IMR-90 (cell line): ENCODE measurements at regions of chr2 and their contacts with region 1.

Region 1: DNA sequence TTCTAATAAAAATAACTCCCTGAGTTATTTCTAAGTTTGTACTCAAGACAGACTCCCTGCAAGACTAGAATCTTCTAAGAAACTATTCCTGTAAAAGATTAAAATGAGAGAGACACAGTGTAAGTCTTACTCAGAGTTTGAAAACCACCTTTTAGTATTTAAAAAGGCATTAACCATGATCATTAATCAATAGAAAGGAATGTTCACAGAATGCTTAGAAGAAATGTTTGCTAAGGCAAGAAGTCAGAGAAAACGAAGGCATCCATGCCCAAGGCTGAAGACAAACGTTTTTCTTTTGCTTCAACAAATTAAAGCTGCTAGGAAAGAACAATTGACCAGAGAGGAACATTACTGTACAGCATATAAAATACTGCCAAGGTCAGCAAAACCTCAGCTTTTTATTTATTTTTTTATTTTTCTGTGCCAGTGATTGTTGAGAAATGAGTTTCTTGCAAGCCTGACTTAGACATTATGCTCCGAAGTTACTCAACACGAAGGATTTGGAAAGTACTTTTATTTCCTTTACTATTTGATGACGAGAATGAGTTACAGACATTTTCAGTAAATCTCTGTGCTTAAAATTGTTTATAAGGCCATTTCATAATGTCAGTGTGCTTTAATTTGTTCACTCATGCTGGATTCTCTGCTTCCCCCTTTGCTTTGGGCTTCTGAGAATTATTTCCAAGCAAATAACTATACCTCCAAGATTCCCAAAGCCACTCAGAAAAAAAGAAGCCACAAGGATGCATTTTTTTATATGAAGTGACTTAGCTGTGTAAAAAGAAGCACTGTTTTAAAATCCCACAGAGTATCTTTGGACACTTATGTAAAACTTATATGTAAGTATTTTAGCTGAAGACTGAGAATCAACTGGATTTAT is 20.5 kb downstream of the RND3 start:
- DNase-seq: peak; percentile 86
- ATAC-seq: peak; percentile 36
- H3K4me3 ChIP-seq: no peak overlapping the region
- H3K27ac ChIP-seq: peak overlapping the region; percentile 42; the same call in 1 of the 2 replicates
- H3K4me1 ChIP-seq: peaks cover 5% of the 10 kb centered on the region
- H3K27me3 ChIP-seq: no peaks in the 10 kb centered on the region
- CTCF ChIP-seq: no peak
- POLR2A ChIP-seq: peak; percentile 2; the same call in 1 of the 2 replicates
- RAD21 ChIP-seq: no peak

Region 2: DNA sequence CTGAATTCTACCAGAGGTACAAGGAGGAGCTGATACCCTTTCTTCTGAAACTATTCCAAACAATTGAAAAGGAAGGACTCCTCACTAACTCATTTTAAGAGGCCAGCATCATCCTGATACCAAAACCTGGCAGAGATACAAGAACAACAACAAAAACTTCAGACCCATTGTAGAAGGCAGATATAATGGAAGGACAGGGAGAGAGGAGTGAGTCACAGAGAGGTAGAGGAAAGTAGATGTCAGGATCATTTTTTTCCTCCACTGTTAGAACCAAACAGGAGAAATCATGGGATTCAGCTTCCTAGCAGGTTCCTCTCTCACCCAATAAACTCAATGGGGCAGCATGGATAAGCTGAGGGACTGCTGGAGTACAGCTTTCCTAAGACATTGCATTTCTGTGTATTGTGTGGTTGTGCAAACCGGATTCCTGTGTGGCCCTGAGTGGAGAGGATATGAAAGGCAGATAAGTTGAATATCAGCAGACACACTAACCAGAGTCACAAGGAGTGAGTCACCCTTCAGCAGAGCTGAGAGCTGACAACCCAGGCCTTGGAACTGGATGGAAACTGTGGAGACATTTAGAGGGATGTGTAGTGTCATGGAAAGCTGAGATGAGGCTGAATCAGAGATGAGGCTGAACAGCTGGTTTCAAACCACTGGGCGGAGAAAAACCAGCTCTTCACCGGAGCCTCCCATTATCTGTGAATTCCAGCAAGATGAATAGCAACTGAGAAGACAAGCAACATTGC is 818.5 kb before region 1 on chr2:
- CTCF ChIA-PET with region 1: no interaction called
- POLR2A ChIA-PET with region 1: no interaction called
- dilution Hi-C with region 1: no loop called
- in situ Hi-C with region 1: no loop called
- intact Hi-C with region 1: loop called (anchors 5 kb)
- DNase-seq: peak; percentile 99
- ATAC-seq: peak; percentile 96
- H3K4me3 ChIP-seq: no peak overlapping the region
- H3K27ac ChIP-seq: peak overlapping the region; percentile 52; the same call in 1 of the 2 replicates
- H3K4me1 ChIP-seq: peaks cover 8% of the 10 kb centered on the region
- H3K27me3 ChIP-seq: no peaks in the 10 kb centered on the region
- CTCF ChIP-seq: 0 out of 2 replicates have a peak, but pooled peaks have one; percentile 18
- POLR2A ChIP-seq: no peak
- RAD21 ChIP-seq: no peak

Region 3: GRCh38 chr2:149924028-149924427 is 543.0 kb before region 1 on chr2:
- CTCF ChIA-PET with region 1: no interaction called
- POLR2A ChIA-PET with region 1: no interaction called
- dilution Hi-C with region 1: no loop called
- in situ Hi-C with region 1: no loop called
- intact Hi-C with region 1: loop called (anchors 10 kb)
- DNase-seq: peak; percentile 62
- ATAC-seq: peak; percentile 75
- H3K4me3 ChIP-seq: no peak overlapping the region
- H3K27ac ChIP-seq: no peak overlapping the region
- H3K4me1 ChIP-seq: peaks cover 5% of the 10 kb centered on the region; the same call in 1 of the 2 replicates
- H3K27me3 ChIP-seq: no peaks in the 10 kb centered on the region
- CTCF ChIP-seq: no peak
- POLR2A ChIP-seq: no peak
- RAD21 ChIP-seq: no peak

Region 4: GRCh38 chr2:150133623-150134022 is 333.4 kb before region 1 on chr2:
- CTCF ChIA-PET with region 1: no interaction called
- POLR2A ChIA-PET with region 1: no interaction called
- dilution Hi-C with region 1: no loop called
- in situ Hi-C with region 1: loop called (anchors 25 kb)
- intact Hi-C with region 1: loop called (anchors 10 kb)
- DNase-seq: peak; percentile 92
- ATAC-seq: peak; percentile 49
- H3K4me3 ChIP-seq: no peak overlapping the region
- H3K27ac ChIP-seq: no peak overlapping the region
- H3K4me1 ChIP-seq: peaks cover 5% of the 10 kb centered on the region; the same call in 1 of the 2 replicates
- H3K27me3 ChIP-seq: no peaks in the 10 kb centered on the region
- CTCF ChIP-seq: no peak
- POLR2A ChIP-seq: no peak
- RAD21 ChIP-seq: peak; percentile 18; the same call in 1 of the 2 replicates

Region 5: DNA sequence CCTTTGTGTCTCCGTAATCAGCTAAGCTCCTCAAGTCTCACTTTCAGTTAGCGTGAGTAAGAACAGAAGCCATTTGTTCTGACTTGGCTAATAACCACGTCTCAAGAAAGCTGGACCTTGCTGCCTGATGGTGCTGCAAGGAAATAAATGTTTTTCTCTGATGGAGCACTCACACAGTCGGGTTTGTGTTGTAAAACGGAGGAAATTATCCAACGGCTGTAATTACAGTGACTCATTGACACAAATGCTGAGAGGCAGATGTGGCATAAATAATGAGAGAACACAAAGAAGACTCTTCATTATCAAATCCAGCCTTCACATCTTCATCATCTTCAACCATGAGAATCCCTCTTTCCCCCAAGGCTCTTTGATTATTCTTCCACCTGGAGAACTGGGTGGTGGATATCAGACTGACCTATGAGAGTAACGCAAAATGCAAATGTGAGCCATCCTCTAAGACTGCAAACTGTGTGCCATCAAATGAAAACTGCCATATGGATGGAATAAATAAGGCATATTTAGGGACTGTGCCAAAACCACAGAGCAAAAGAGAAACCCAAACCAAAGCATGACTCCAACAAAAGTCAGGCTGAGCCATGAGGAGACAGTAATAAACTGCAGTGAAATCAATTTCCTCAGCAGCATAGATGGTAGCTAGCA is 232.1 kb before region 1 on chr2:
- CTCF ChIA-PET with region 1: no interaction called
- POLR2A ChIA-PET with region 1: no interaction called
- dilution Hi-C with region 1: no loop called
- in situ Hi-C with region 1: no loop called
- intact Hi-C with region 1: loop called (anchors 2 kb)
- DNase-seq: peak; percentile 93
- ATAC-seq: peak; percentile 94
- H3K4me3 ChIP-seq: peak overlapping the region; percentile 20; the same call in 1 of the 2 replicates
- H3K27ac ChIP-seq: peak overlapping the region; percentile 88
- H3K4me1 ChIP-seq: peaks cover 6% of the 10 kb centered on the region
- H3K27me3 ChIP-seq: no peaks in the 10 kb centered on the region
- CTCF ChIP-seq: no peak
- POLR2A ChIP-seq: no peak
- RAD21 ChIP-seq: peak; percentile 27

Region 6: DNA sequence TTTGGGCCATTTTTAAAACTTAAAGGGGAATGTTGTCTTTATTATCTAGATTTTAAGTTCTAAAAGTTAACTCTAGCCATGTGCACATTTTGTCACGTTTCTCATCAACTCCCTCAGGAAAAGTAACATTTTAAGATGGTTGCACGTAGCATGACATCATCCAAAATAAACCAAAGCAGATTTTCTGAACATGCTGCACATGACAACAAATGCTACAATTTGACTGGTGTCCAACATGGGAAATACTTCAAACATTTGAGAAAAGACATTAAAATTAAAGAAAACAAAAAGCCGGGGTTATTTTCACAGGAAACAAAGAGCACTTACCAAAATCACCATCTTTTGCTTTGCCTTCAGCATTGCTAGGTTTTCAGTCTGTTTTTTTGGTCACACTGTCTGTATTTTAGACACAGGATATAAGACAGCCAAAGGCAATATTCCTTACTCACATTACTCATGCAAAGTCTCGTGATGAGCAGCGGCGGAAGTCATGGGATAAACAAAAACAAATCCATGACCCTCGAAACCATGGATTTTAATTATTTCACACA is 71.7 kb after region 1 on chr2:
- CTCF ChIA-PET with region 1: no interaction called
- POLR2A ChIA-PET with region 1: no interaction called
- dilution Hi-C with region 1: no loop called
- in situ Hi-C with region 1: no loop called
- intact Hi-C with region 1: no loop called
- DNase-seq: peak; percentile 60
- ATAC-seq: peak; percentile 54; the same call in 1 of the 2 replicates
- H3K4me3 ChIP-seq: no peak overlapping the region
- H3K27ac ChIP-seq: no peak overlapping the region
- H3K4me1 ChIP-seq: peaks cover 3% of the 10 kb centered on the region; the same call in 1 of the 2 replicates
- H3K27me3 ChIP-seq: no peaks in the 10 kb centered on the region
- CTCF ChIP-seq: no peak
- POLR2A ChIP-seq: no peak
- RAD21 ChIP-seq: no peak